ENCODE measurements at regions of chr7 and their contacts with region 1.

Region 1: DNA sequence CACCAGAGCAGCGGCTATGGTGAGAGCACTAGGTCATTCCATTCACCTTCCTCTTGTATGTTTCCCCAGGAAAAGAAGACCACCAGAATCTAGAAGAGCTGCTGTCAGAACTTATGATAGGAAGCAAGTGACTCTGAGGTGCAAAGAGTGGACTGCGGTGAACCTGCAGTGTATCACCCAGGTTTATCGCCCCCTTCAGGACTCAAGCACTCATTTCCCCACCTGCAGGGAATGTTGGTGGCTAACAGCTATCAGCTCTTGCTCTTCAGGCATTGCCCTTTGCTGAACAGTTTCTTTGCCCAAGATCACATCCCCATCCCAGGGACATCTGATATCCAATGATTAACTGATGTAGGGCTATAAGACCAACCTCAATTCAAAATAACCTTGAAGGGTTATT is 66.3 kb upstream of the IL6 start:
- DNase-seq: peak; percentile 32
- ATAC-seq: peak; percentile 86
- H3K4me3 Mint-ChIP-seq: no peak overlapping the region
- H3K27ac Mint-ChIP-seq: no peak overlapping the region
- H3K4me1 Mint-ChIP-seq: peaks cover 25% of the 10 kb centered on the region
- H3K27me3 Mint-ChIP-seq: no peaks in the 10 kb centered on the region
- CTCF ChIP-seq: peak; percentile 54; the same call in 1 of the 2 replicates

Region 2: GRCh38 chr7:22672846-22673652 is 12.3 kb after region 1 on chr7:
- CTCF ChIA-PET with region 1: interaction called, 21 read pairs
- POLR2A ChIA-PET with region 1: no interaction called
- DNase-seq: no peak
- ATAC-seq: 0 out of 2 replicates have a peak, but pooled peaks have one; percentile 8
- H3K4me3 Mint-ChIP-seq: no peak overlapping the region
- H3K27ac Mint-ChIP-seq: peak overlapping the region; percentile 33
- H3K4me1 Mint-ChIP-seq: peaks cover 61% of the 10 kb centered on the region
- H3K27me3 Mint-ChIP-seq: no peaks in the 10 kb centered on the region
- CTCF ChIP-seq: no peak